Breast epithelium (tissue), 4 donors: ENCODE measurements at regions of chr21 and their contacts with region 1.

Region 1: GRCh38 chr21:37873655-37874054 is 42.6 kb downstream of the KCNJ6 start:
- DNase-seq: no peak
- H3K4me3 ChIP-seq: no peak overlapping the region
- H3K27ac ChIP-seq: no peak overlapping the region
- H3K4me1 ChIP-seq: no peaks in the 10 kb centered on the region
- H3K27me3 ChIP-seq: peaks cover 0 to 23% of the 10 kb centered on the region in 2 donors
- CTCF ChIP-seq: no peak
- POLR2A ChIP-seq: no peak

Region 2: DNA sequence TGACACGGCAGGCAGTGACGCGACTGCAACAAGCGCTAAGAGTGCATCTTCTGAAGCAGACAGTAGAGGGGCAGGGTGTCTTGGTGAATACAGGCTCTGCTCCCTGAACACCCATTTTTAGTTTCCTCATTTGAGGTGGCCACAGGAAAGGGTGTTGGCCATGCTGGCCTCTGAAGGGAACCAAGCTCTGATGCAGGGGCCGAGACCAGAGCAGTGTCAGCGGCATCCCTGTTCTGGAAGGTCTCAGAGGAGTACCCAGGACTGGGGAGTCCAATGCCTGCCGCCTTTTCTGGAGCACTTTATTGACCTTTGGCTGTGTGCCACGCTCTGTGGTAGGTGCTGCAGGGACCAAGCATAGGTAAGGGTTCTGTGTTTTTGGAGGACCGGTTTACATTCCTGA is 57.8 kb before region 1 on chr21:
- intact Hi-C with region 1: no loop called
- DNase-seq: no peak
- H3K4me3 ChIP-seq: no peak overlapping the region
- H3K27ac ChIP-seq: no peak overlapping the region
- H3K4me1 ChIP-seq: no peaks in the 10 kb centered on the region
- H3K27me3 ChIP-seq: no peaks in the 10 kb centered on the region
- CTCF ChIP-seq: no peak
- POLR2A ChIP-seq: no peak

Region 3: GRCh38 chr21:37862536-37862935 is 11.1 kb before region 1 on chr21:
- intact Hi-C with region 1: no loop called
- DNase-seq: no peak
- H3K4me3 ChIP-seq: no peak overlapping the region
- H3K27ac ChIP-seq: no peak overlapping the region
- H3K4me1 ChIP-seq: no peaks in the 10 kb centered on the region
- H3K27me3 ChIP-seq: no peaks in the 10 kb centered on the region
- CTCF ChIP-seq: no peak
- POLR2A ChIP-seq: no peak

Region 4: DNA sequence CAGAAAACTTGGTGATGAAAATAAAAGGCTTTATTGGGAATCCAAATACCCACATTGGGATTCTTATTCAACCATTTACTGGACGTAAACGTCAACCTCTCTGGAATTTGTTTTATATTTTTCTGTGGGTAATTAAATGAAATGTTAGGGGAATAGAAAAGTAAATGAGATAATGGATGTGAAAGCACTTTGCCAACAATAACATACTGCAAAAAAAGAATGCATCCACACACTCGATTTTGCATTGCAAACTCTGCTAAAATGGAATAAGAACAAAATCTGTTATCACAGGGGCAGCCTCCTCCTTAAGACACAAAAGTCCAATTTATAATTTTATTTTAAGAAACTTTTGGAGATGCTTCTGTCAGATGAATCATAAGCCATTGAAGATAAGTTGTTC is 536.3 kb after region 1 on chr21:
- intact Hi-C with region 1: loop called (anchors 5 kb)
- DNase-seq: no peak
- H3K4me3 ChIP-seq: no peak overlapping the region
- H3K27ac ChIP-seq: no peak overlapping the region
- H3K4me1 ChIP-seq: no peaks in the 10 kb centered on the region
- H3K27me3 ChIP-seq: no peaks in the 10 kb centered on the region
- CTCF ChIP-seq: no peak
- POLR2A ChIP-seq: no peak